ENCODE measurements at regions of chr21 and their contacts with region 1.

Region 1: GRCh38 chr21:26961698-26962097 is 5.2 kb downstream of the ADAMTS5 start:
- DNase-seq: no peak
- ATAC-seq: no peak
- H3K4me3 ChIP-seq: no peak overlapping the region
- H3K27ac ChIP-seq: peak overlapping the region in 2 of 10 donors; percentile 51 to 70
- H3K4me1 ChIP-seq: peaks cover 0 to 39% (median 23%) of the 10 kb centered on the region in 9 donors
- H3K27me3 ChIP-seq: peaks cover 0 to 30% (median 12%) of the 10 kb centered on the region in 7 donors
- CTCF ChIP-seq: peak in 6 of 9 donors; percentile 17 to 30 (median 24)

Region 2: GRCh38 chr21:26881504-26882228 is 80.0 kb before region 1 on chr21:
- intact Hi-C with region 1: loop called in 1 of 10 experiments (anchors 5 kb)
- DNase-seq: no peak
- ATAC-seq: no peak
- H3K4me3 ChIP-seq: no peak overlapping the region
- H3K27ac ChIP-seq: no peak overlapping the region
- H3K4me1 ChIP-seq: no peaks in the 10 kb centered on the region
- H3K27me3 ChIP-seq: no peaks in the 10 kb centered on the region
- CTCF ChIP-seq: peak; percentile 15 to 61 (median 47)

Region 3: DNA sequence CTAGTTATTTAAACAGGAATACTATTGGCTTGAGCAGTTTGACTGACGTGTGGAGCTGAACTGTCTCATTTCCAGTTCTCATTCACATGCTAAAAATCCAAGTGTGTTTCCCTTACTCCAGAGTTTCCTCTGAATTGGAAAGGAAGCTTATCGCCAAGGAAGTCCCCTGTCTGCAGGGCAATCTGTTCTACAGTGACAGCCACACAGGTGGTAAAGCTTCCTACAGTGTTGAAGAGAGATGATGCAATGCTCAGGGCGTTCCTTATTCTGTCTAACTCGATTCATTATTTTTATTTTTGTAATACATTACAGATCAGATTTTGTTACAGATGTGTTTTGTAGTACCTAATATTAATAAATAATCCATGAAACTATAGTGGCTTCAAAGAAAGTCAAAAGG is 36.1 kb before region 1 on chr21:
- intact Hi-C with region 1: loop called in 1 of 10 experiments (anchors 5 kb)
- DNase-seq: no peak
- ATAC-seq: no peak
- H3K4me3 ChIP-seq: no peak overlapping the region
- H3K27ac ChIP-seq: no peak overlapping the region
- H3K4me1 ChIP-seq: no peaks in the 10 kb centered on the region
- H3K27me3 ChIP-seq: no peaks in the 10 kb centered on the region
- CTCF ChIP-seq: no peak

Measured in heart right ventricle (tissue), 16 donors.